ENCODE measurements at regions of chr4 and their contacts with region 1.

Region 1: DNA sequence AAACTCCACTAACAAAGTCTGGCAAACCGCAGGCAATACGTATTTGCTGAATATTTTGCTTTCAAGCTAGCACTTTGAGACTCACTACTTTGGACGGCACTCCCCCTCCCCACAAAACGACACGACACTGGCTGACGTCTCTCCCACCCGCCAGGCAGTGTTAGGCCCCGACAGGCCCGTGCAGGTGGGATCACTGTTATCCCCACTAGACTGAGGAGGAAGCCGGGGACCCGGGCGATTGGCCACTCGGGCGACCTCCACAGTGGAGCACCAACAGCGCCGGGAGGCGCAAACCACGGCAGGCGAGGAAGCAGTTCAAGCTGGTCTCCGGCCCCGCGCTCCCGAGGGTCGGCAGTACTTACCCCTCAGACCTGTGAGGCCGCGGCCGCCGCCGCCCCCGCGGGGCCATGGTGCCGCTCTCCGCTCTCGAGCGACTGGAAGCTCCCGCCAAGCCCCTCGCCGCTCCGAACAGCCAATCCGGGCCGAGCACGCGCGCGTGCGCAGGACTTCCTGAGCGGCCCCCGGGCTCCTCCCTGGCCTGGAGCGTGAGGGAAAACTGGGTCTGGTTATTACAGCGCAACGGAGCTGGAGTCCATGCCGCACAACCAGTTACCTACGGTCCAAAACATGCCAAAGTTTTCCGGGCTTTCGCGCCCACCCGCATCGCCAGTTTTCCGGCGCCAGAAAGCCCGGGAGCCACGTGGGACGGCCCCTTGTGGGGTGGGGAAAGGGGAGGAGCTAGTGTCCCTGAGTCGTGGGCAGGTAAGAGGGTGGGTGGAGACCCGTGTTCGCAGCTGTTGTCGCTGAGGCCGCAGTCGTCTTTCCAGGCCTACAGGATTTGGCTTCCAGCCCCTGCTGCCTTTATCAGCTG is at the start of gene CENPU:
- DNase-seq: peak; percentile 99
- H3K4me3 ChIP-seq: peak within 1 kb of the TSS; percentile 75 to 91 (median 88)
- H3K27ac ChIP-seq: peak within 1 kb of the TSS; percentile 72
- H3K4me1 ChIP-seq: peaks cover 16% of the 10 kb centered on the region
- H3K27me3 ChIP-seq: no peaks in the 10 kb centered on the region
- CTCF ChIP-seq: no peak
- POLR2A ChIP-seq: peak; percentile 68
- total RNA-seq, gene CENPU: 35.6 and 37.9 TPM in 2 replicates

Region 2: DNA sequence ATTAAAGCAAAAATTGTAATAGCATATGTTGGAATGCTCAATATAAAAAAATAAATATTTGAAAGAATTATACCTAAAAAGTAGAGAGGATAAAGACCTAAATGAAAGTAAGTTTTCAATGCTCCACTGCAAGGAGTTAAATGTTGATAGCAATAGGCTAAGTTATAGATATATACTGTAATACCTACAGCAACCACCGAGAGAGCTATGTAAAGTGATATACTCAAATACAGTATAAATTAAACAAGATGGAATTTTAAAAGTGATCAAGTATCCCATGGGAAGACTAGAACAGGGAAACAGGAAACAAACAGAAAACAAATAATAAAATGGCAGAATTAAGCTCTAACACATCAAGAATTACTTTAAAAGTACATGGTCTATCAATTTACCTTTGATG is 158.6 kb before region 1 on chr4:
- CTCF ChIA-PET with region 1: no interaction called
- POLR2A ChIA-PET with region 1: no interaction called
- dilution Hi-C with region 1: no loop called
- intact Hi-C with region 1: loop called (anchors 1 kb)
- DNase-seq: peak; percentile 13
- H3K4me3 ChIP-seq: peak overlapping the region in 1 of 3 experiments; percentile 47
- H3K27ac ChIP-seq: peak overlapping the region; percentile 73
- H3K4me1 ChIP-seq: peaks cover 20% of the 10 kb centered on the region
- H3K27me3 ChIP-seq: no peaks in the 10 kb centered on the region
- CTCF ChIP-seq: no peak
- POLR2A ChIP-seq: no peak

Region 3: DNA sequence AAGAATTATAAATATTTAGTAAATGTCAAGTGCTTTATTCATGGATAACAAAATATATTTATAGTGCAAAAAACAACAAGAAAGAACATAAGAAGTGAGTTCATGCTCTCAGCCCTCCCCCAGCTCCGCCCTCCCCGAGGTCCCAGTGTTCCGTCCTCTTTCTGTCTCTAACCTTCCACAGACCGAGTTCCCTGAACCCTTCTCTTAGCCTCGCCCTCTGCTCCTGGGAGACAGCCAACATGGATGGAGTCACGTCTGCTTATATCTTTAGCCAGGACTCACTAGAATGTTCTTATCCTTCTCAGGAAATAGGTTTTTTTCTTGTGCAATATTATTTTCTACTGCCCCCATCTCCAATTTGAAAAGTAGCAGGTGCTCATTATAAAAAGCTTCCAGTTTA is 244.3 kb after region 1 on chr4:
- CTCF ChIA-PET with region 1: no interaction called
- POLR2A ChIA-PET with region 1: no interaction called
- dilution Hi-C with region 1: no loop called
- intact Hi-C with region 1: no loop called
- DNase-seq: no peak
- H3K4me3 ChIP-seq: no peak overlapping the region
- H3K27ac ChIP-seq: no peak overlapping the region
- H3K4me1 ChIP-seq: no peaks in the 10 kb centered on the region
- H3K27me3 ChIP-seq: peaks cover 0 to 1% of the 10 kb centered on the region in 2 experiments
- CTCF ChIP-seq: no peak
- POLR2A ChIP-seq: no peak

Measured in endothelial cell of umbilical vein (primary cell).